ENCODE measurements at regions of chr19 and their contacts with region 1.

Region 1: GRCh38 chr19:45152504-45153338 is 8.1 kb downstream of the NKPD1 start:
- DNase-seq: peak; percentile 78 to 84
- H3K4me3 ChIP-seq: peak overlapping the region; percentile 67
- H3K4me3 Mint-ChIP-seq: peak overlapping the region; percentile 74
- H3K27ac Mint-ChIP-seq: peak overlapping the region; percentile 64
- H3K4me1 ChIP-seq: peaks cover 16% of the 10 kb centered on the region
- H3K4me1 Mint-ChIP-seq: peaks cover 11% of the 10 kb centered on the region
- H3K27me3 ChIP-seq: no peaks in the 10 kb centered on the region
- H3K27me3 Mint-ChIP-seq: no peaks in the 10 kb centered on the region
- CTCF ChIP-seq: no peak

Region 2: GRCh38 chr19:45283443-45284033 is 130.8 kb after region 1 on chr19:
- CTCF ChIA-PET with region 1: interaction called, 3 read pairs
- POLR2A ChIA-PET with region 1: interaction called, 15 read pairs
- intact Hi-C with region 1: no loop called
- DNase-seq: no peak
- H3K4me3 ChIP-seq: no peak overlapping the region
- H3K4me3 Mint-ChIP-seq: no peak overlapping the region
- H3K27ac Mint-ChIP-seq: no peak overlapping the region
- H3K4me1 ChIP-seq: no peaks in the 10 kb centered on the region
- H3K4me1 Mint-ChIP-seq: no peaks in the 10 kb centered on the region
- H3K27me3 ChIP-seq: no peaks in the 10 kb centered on the region
- H3K27me3 Mint-ChIP-seq: no peaks in the 10 kb centered on the region
- CTCF ChIP-seq: no peak